Activated CD8-positive, alpha-beta T cell treated with anti-CD3 and anti-CD28 coated beads for 36 hours (primary cell): ENCODE measurements at regions of chr10 and their contacts with region 1.

Region 1: GRCh38 chr10:92848441-92849233 is at the start of gene EXOC6:
- DNase-seq: peak; percentile 88
- ATAC-seq: peak; percentile 82
- H3K4me3 Mint-ChIP-seq: peak within 1 kb of the TSS; percentile 77
- H3K27ac Mint-ChIP-seq: peak within 1 kb of the TSS; percentile 80
- H3K4me1 Mint-ChIP-seq: peaks cover 37% of the 10 kb centered on the region
- H3K27me3 Mint-ChIP-seq: no peaks in the 10 kb centered on the region
- CTCF ChIP-seq: no peak
- total RNA-seq, gene EXOC6: 8.8 to 9.5 TPM

Region 2: GRCh38 chr10:92816091-92816531 is 32.5 kb before region 1 on chr10:
- CTCF ChIA-PET with region 1: interaction called, 16 read pairs
- POLR2A ChIA-PET with region 1: no interaction called
- intact Hi-C with region 1: no loop called
- DNase-seq: no peak
- ATAC-seq: no peak
- H3K4me3 Mint-ChIP-seq: no peak overlapping the region
- H3K27ac Mint-ChIP-seq: no peak overlapping the region
- H3K4me1 Mint-ChIP-seq: peaks cover 3% of the 10 kb centered on the region
- H3K27me3 Mint-ChIP-seq: peaks cover 3% of the 10 kb centered on the region
- CTCF ChIP-seq: no peak

Region 3: DNA sequence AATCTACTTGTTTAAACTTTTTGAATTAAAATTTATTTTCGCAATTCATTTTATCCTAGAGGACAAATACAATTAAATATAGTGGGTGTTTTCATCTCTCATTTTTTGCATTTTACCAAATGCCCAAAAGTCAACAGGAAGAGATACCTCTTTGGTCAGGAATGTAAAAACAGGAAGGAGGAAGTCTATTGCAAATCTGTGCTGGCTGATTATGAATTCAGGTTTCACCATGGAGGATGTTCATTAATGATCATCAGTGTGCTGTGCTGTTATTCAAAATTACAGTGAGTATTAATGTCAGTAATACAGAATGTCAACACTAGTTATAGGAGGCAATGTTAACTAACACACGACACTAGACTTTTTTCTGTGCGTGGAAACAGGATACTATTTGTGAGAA is 24.4 kb after region 1 on chr10:
- CTCF ChIA-PET with region 1: interaction called, 10 read pairs
- POLR2A ChIA-PET with region 1: no interaction called
- intact Hi-C with region 1: no loop called
- DNase-seq: no peak
- ATAC-seq: no peak
- H3K4me3 Mint-ChIP-seq: no peak overlapping the region
- H3K27ac Mint-ChIP-seq: no peak overlapping the region
- H3K4me1 Mint-ChIP-seq: peaks cover 30% of the 10 kb centered on the region
- H3K27me3 Mint-ChIP-seq: no peaks in the 10 kb centered on the region
- CTCF ChIP-seq: no peak

Region 4: GRCh38 chr10:92880233-92880861 is 31.7 kb after region 1 on chr10:
- CTCF ChIA-PET with region 1: interaction called, 12 read pairs
- POLR2A ChIA-PET with region 1: no interaction called
- intact Hi-C with region 1: loop called (anchors 5 kb)
- DNase-seq: peak; percentile 5
- ATAC-seq: no peak
- H3K4me3 Mint-ChIP-seq: no peak overlapping the region
- H3K27ac Mint-ChIP-seq: no peak overlapping the region
- H3K4me1 Mint-ChIP-seq: peaks cover 15% of the 10 kb centered on the region
- H3K27me3 Mint-ChIP-seq: no peaks in the 10 kb centered on the region
- CTCF ChIP-seq: peak; percentile 55